ENCODE measurements at regions of chr21 and their contacts with region 1.

Region 1: GRCh38 chr21:29164325-29164942 is 34.0 kb downstream of the MAP3K7CL start:
- DNase-seq: no peak
- H3K4me3 ChIP-seq: no peak overlapping the region
- H3K27ac ChIP-seq: peak overlapping the region; percentile 78 to 86
- H3K4me1 ChIP-seq: peaks cover 5 to 14% of the 10 kb centered on the region in 2 donors
- H3K27me3 ChIP-seq: no peaks in the 10 kb centered on the region
- CTCF ChIP-seq: peak; percentile 65 to 78 (median 65)

Region 2: GRCh38 chr21:29085106-29085752 is 79.2 kb before region 1 on chr21:
- intact Hi-C with region 1: loop called (anchors 5 kb)
- DNase-seq: no peak
- H3K4me3 ChIP-seq: peak overlapping the region in 1 of 2 donors; percentile 9
- H3K27ac ChIP-seq: peak overlapping the region in 1 of 2 donors; percentile 6
- H3K4me1 ChIP-seq: peaks cover 0 to 9% of the 10 kb centered on the region in 2 donors
- H3K27me3 ChIP-seq: no peaks in the 10 kb centered on the region
- CTCF ChIP-seq: no peak

Region 3: GRCh38 chr21:29181799-29182470 is 17.5 kb after region 1 on chr21:
- intact Hi-C with region 1: loop called (anchors 2 kb)
- DNase-seq: no peak
- H3K4me3 ChIP-seq: peak overlapping the region; percentile 47 to 58
- H3K27ac ChIP-seq: peak overlapping the region; percentile 91 to 95
- H3K4me1 ChIP-seq: peaks cover 0 to 23% of the 10 kb centered on the region in 2 donors
- H3K27me3 ChIP-seq: no peaks in the 10 kb centered on the region
- CTCF ChIP-seq: no peak

Region 4: GRCh38 chr21:29351691-29352090 is 187.3 kb after region 1 on chr21:
- intact Hi-C with region 1: loop called (anchors 5 kb)
- DNase-seq: no peak
- H3K4me3 ChIP-seq: no peak overlapping the region
- H3K27ac ChIP-seq: peak overlapping the region; percentile 50 to 60
- H3K4me1 ChIP-seq: peaks cover 0 to 23% of the 10 kb centered on the region in 2 donors
- H3K27me3 ChIP-seq: no peaks in the 10 kb centered on the region
- CTCF ChIP-seq: no peak

Measured in ascending aorta (tissue), 2 donors.